CD8-positive, alpha-beta T cell (primary cell): ENCODE measurements at regions of chr6 and their contacts with region 1.

Region 1: DNA sequence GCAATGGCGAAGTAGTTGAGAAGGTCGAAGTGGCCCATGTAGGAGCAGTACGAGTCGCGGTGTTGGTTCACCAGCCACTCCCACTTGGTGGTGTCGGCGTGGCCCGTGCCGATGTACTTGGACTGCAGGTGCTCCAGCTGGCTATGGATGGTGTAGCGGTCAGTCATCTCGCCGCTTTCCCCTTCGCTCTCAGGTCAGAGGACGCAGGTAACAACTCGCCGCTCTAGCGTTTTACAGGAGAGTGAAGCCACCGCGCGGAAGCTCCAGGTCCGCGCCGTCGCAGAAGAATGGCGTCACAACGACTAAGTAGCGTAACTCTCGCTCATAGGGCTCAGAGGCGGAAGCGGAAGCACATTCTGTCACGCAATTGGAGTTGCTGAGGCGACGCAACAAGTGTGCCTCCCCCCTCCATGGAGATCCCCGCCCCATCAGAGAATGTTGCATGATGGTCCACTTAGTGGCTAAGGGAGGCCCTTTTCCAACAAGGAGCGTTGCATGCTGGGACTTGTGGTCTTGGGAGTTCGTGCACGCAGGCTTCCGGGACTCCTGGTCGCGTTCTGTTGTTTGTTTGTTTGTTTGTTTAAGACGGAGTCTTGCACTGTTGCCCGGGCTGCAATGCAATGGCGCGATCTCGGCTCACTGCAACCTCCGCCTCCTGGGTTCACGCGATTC is at the start of gene SF3B5:
- DNase-seq: peak; percentile 94 to 100 (median 97)
- ATAC-seq: peak; percentile 96
- H3K4me3 ChIP-seq: peak within 1 kb of the TSS; percentile 79 to 91
- H3K4me3 Mint-ChIP-seq: peak within 1 kb of the TSS; percentile 97
- H3K27ac ChIP-seq: peak within 1 kb of the TSS; percentile 91 to 94
- H3K27ac Mint-ChIP-seq: peak within 1 kb of the TSS; percentile 98
- H3K4me1 ChIP-seq: peaks cover 18% of the 10 kb centered on the region
- H3K4me1 Mint-ChIP-seq: peaks cover 25% of the 10 kb centered on the region
- H3K27me3 ChIP-seq: no peaks in the 10 kb centered on the region
- H3K27me3 Mint-ChIP-seq: no peaks in the 10 kb centered on the region
- CTCF ChIP-seq: no peak
- total RNA-seq, gene SF3B5: 167 to 171 TPM

Region 2: DNA sequence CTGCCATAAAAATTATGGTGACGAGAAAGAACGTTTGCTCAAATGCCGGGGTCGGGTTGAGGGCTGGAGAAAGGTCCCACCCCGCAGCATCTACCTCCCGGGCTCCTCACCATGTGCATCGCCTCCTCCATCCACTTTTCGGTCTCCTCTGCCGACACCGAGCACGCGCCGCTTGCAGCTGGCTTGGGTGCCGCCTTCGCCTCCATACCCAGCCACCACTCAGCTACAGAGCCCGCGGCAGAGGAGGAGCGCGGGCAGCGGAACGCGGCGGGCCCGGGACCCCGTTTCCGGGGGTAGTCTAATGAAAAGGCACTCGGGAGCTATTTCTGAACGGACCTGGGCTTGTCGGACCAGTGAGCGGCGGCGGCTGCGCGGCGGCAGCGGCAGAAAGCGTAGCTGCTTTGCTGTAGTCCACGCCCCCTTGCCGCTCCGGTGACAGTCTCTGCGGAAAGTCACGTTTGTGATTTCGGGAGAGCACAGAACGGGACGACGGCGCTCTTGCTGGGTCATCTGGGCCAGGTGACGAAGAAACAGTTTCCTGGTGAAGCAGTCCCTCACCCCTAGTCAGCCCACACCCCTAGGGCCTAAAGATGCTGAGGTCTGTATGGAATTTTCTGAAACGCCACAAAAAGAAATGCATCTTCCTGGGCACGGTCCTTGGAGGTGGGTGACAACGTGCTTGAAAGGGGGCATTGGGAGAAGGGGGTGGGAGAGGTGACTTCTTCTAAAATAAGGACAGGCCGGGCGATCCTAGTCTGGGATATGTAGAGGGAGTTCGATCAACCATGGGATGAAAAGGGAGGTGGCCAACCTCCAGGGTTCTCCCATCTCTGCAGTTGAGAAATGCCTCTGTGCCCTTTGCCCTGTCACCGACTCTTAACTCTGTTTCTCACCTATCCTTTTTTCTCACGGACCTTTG is 644.8 kb before region 1 on chr6 and contains the starts of genes ADAT2 and PEX3:
- CTCF ChIA-PET with region 1: no interaction called
- POLR2A ChIA-PET with region 1: no interaction called
- intact Hi-C with region 1: loop called (anchors 1 to 5 kb)
- DNase-seq: peak; percentile 82 to 95 (median 92)
- ATAC-seq: peak; percentile 90
- H3K4me3 ChIP-seq: peak within 1 kb of the TSS; percentile 64 to 86
- H3K4me3 Mint-ChIP-seq: peak within 1 kb of the TSS; percentile 100
- H3K27ac ChIP-seq: peak within 1 kb of the TSS; percentile 68 to 74
- H3K27ac Mint-ChIP-seq: peak within 1 kb of the TSS; percentile 96
- H3K4me1 ChIP-seq: peaks cover 21% of the 10 kb centered on the region
- H3K4me1 Mint-ChIP-seq: peaks cover 57% of the 10 kb centered on the region
- H3K27me3 ChIP-seq: no peaks in the 10 kb centered on the region
- H3K27me3 Mint-ChIP-seq: no peaks in the 10 kb centered on the region
- CTCF ChIP-seq: no peak
- total RNA-seq, gene ADAT2: 18.8 to 19.9 TPM
- total RNA-seq, gene PEX3: 10.5 to 11.6 TPM

Region 3: GRCh38 chr6:143940011-143940597 is 155.4 kb before region 1 on chr6:
- CTCF ChIA-PET with region 1: interaction called, 8 read pairs
- POLR2A ChIA-PET with region 1: no interaction called
- intact Hi-C with region 1: loop called (anchors 1 to 2 kb)
- DNase-seq: peak; percentile 7 to 76 (median 51)
- ATAC-seq: peak; percentile 94
- H3K4me3 ChIP-seq: no peak overlapping the region
- H3K4me3 Mint-ChIP-seq: no peak overlapping the region
- H3K27ac ChIP-seq: no peak overlapping the region
- H3K27ac Mint-ChIP-seq: no peak overlapping the region
- H3K4me1 ChIP-seq: peaks cover 5% of the 10 kb centered on the region
- H3K4me1 Mint-ChIP-seq: peaks cover 13% of the 10 kb centered on the region
- H3K27me3 ChIP-seq: no peaks in the 10 kb centered on the region
- H3K27me3 Mint-ChIP-seq: no peaks in the 10 kb centered on the region
- CTCF ChIP-seq: peak; percentile 93

Region 4: GRCh38 chr6:144063744-144064401 is 31.6 kb before region 1 on chr6:
- CTCF ChIA-PET with region 1: no interaction called
- POLR2A ChIA-PET with region 1: interaction called, 32 read pairs
- intact Hi-C with region 1: loop called (anchors 1 kb)
- DNase-seq: peak; percentile 85 to 96 (median 91)
- ATAC-seq: peak; percentile 90
- H3K4me3 ChIP-seq: peak overlapping the region; percentile 93 to 97
- H3K4me3 Mint-ChIP-seq: peak overlapping the region; percentile 91
- H3K27ac ChIP-seq: peak overlapping the region; percentile 86 to 88
- H3K27ac Mint-ChIP-seq: peak overlapping the region; percentile 95
- H3K4me1 ChIP-seq: peaks cover 16% of the 10 kb centered on the region
- H3K4me1 Mint-ChIP-seq: peaks cover 30% of the 10 kb centered on the region
- H3K27me3 ChIP-seq: no peaks in the 10 kb centered on the region
- H3K27me3 Mint-ChIP-seq: no peaks in the 10 kb centered on the region
- CTCF ChIP-seq: no peak

Region 5: DNA sequence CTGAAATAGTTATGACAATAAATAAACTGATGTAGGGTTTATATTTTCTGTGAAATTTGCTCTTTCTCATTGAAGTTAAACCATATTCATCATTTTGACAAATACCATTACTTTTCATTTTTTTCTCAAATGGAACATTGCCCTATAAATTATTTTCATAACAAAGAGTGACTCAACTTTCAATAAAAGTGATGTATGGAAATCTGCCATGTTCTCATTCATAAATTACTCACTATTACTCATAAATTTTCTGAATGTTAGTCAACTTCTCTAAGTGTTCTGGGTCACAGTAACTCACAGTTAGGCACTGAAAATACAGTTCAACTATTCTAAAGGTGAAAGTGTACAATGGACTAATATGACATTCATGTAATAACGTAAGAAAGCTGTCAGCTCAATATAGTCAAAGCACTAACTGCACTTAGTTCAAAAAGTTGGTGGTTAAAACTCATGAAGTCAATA is 35.8 kb after region 1 on chr6:
- CTCF ChIA-PET with region 1: no interaction called
- POLR2A ChIA-PET with region 1: no interaction called
- intact Hi-C with region 1: no loop called
- DNase-seq: no peak
- ATAC-seq: no peak
- H3K4me3 ChIP-seq: no peak overlapping the region
- H3K4me3 Mint-ChIP-seq: no peak overlapping the region
- H3K27ac ChIP-seq: no peak overlapping the region
- H3K27ac Mint-ChIP-seq: no peak overlapping the region
- H3K4me1 ChIP-seq: no peaks in the 10 kb centered on the region
- H3K4me1 Mint-ChIP-seq: no peaks in the 10 kb centered on the region
- H3K27me3 ChIP-seq: peaks cover 0 to 2% of the 10 kb centered on the region in 2 experiments
- H3K27me3 Mint-ChIP-seq: peaks cover 4% of the 10 kb centered on the region
- CTCF ChIP-seq: no peak

Region 6: GRCh38 chr6:144334131-144334708 is 238.8 kb after region 1 on chr6:
- CTCF ChIA-PET with region 1: no interaction called
- POLR2A ChIA-PET with region 1: no interaction called
- intact Hi-C with region 1: loop called (anchors 2 to 5 kb)
- DNase-seq: peak; percentile 42 to 94 (median 78)
- ATAC-seq: peak; percentile 93
- H3K4me3 ChIP-seq: peak overlapping the region; percentile 51 to 52
- H3K4me3 Mint-ChIP-seq: peak overlapping the region; percentile 86
- H3K27ac ChIP-seq: peak overlapping the region; percentile 65 to 90
- H3K27ac Mint-ChIP-seq: peak overlapping the region; percentile 98
- H3K4me1 ChIP-seq: peaks cover 47% of the 10 kb centered on the region
- H3K4me1 Mint-ChIP-seq: peaks cover 53% of the 10 kb centered on the region
- H3K27me3 ChIP-seq: no peaks in the 10 kb centered on the region
- H3K27me3 Mint-ChIP-seq: no peaks in the 10 kb centered on the region
- CTCF ChIP-seq: no peak

Region 7: DNA sequence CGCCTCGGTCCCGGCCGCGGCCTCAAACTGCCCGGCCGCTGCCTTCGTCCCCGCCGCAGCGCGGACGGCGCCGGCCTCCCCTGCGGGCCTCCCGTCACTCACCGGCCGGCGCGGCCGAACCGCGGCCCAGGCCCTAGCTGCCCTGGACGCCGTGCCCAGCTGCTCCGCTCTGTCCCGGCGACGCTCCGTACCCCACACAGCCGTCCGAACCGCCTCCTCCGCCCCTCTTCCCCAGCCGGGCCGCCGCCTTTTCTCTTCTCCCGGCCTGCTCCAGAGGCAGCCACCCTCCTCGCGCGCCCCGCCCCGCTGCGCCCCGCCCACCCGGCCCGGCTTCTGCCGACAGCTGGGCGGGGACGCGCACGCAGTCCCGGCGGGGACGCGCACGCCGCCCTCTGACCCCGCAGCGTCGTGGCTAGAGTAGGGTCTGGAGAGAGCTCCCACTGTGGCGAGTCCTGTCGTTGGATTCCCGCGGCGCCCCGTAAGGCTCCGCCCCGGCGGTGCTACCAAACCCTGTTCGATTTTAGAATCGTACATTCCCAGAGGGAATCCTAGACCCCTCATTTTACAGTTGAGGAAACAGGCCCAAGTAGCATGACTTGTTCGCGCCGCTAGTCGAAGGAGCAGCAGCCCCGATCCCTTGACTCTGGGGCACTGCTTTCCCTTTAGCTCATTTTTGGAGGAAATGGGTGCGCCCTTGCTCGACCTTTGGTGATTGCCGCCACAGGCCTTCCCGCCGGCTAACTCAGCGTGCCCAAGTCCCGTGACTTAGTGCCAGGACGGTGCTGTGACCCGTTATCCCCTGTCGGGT is 1719.2 kb after region 1 on chr6 and contains the start of gene FBXO30:
- CTCF ChIA-PET with region 1: no interaction called
- POLR2A ChIA-PET with region 1: no interaction called
- intact Hi-C with region 1: loop called in 1 of 2 experiments (anchors 10 kb)
- DNase-seq: peak; percentile 73 to 94 (median 84)
- ATAC-seq: peak; percentile 89
- H3K4me3 ChIP-seq: peak within 1 kb of the TSS; percentile 80 to 83
- H3K4me3 Mint-ChIP-seq: peak within 1 kb of the TSS; percentile 96
- H3K27ac ChIP-seq: peak within 1 kb of the TSS; percentile 58 to 89
- H3K27ac Mint-ChIP-seq: peak within 1 kb of the TSS; percentile 96
- H3K4me1 ChIP-seq: peaks cover 32% of the 10 kb centered on the region
- H3K4me1 Mint-ChIP-seq: peaks cover 45% of the 10 kb centered on the region
- H3K27me3 ChIP-seq: no peaks in the 10 kb centered on the region
- H3K27me3 Mint-ChIP-seq: no peaks in the 10 kb centered on the region
- CTCF ChIP-seq: peak; percentile 33
- total RNA-seq, gene FBXO30: 1.5 to 1.7 TPM